Thyroid gland (tissue), 4 donors: ENCODE measurements at regions of chr13 and their contacts with region 1.

Region 1: GRCh38 chr13:49792550-49793324 is at the start of gene KPNA3:
- DNase-seq: peak; percentile 97 to 98
- H3K4me3 ChIP-seq: peak within 1 kb of the TSS; percentile 69 to 83 (median 77)
- H3K27ac ChIP-seq: peak within 1 kb of the TSS; percentile 67 to 94 (median 70)
- H3K4me1 ChIP-seq: peaks cover 8 to 20% of the 10 kb centered on the region in 2 donors
- H3K27me3 ChIP-seq: no peaks in the 10 kb centered on the region
- CTCF ChIP-seq: peak in 1 of 6 experiments; percentile 11
- POLR2A ChIP-seq: peak; percentile 44 to 97
- total RNA-seq, gene KPNA3: 29.5 to 34.6 (median 32.1) TPM

Region 2: GRCh38 chr13:49690992-49691886 is 101.5 kb before region 1 on chr13 and contains the start of gene EBPL:
- intact Hi-C with region 1: loop called (anchors 5 kb)
- DNase-seq: peak; percentile 95
- H3K4me3 ChIP-seq: peak within 1 kb of the TSS; percentile 21 to 56 (median 53)
- H3K27ac ChIP-seq: peak within 1 kb of the TSS; percentile 41 to 84 (median 73)
- H3K4me1 ChIP-seq: peaks cover 9 to 13% of the 10 kb centered on the region in 2 donors
- H3K27me3 ChIP-seq: no peaks in the 10 kb centered on the region
- CTCF ChIP-seq: no peak
- POLR2A ChIP-seq: peak in 1 of 2 donors; percentile 79
- total RNA-seq, gene EBPL: 41.0 to 102 (median 66.9) TPM